Common myeloid progenitor, CD34-positive (primary cell): ENCODE measurements at regions of chr13 and their contacts with region 1.

Region 1: GRCh38 chr13:48037346-48038173 is at the start of gene NUDT15:
- DNase-seq: peak; percentile 99 to 100 (median 99)
- H3K4me3 ChIP-seq: peak within 1 kb of the TSS; percentile 61 to 94 (median 84)
- H3K27ac ChIP-seq: peak within 1 kb of the TSS; percentile 96 to 97
- H3K4me1 ChIP-seq: peaks cover 4 to 22% (median 18%) of the 10 kb centered on the region in 4 experiments
- H3K27me3 ChIP-seq: no peaks in the 10 kb centered on the region

Region 2: DNA sequence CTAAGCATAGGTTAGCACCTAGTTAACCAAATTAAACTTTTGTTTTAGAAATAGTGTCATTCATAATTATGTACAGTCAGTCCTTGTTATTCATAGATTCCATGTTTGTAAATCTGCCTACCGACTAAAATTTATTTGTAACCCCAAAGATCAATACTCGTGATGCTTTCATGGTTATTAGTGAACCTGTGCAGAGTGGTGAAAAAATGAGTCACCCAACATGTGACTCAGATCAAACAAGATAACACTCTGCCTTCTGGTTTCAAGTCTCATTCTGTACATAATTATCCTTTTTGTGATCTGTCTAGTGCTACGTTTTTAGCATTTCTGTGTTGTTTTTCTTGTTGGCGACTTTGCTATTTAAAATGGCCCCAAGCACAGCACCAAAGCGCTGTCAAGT is 311.2 kb before region 1 on chr13:
- CTCF ChIA-PET with region 1: no interaction called
- POLR2A ChIA-PET with region 1: no interaction called
- DNase-seq: no peak
- H3K4me3 ChIP-seq: no peak overlapping the region
- H3K27ac ChIP-seq: no peak overlapping the region
- H3K4me1 ChIP-seq: no peaks in the 10 kb centered on the region
- H3K27me3 ChIP-seq: no peaks in the 10 kb centered on the region

Region 3: GRCh38 chr13:47964863-47965262 is 72.7 kb before region 1 on chr13:
- CTCF ChIA-PET with region 1: no interaction called
- POLR2A ChIA-PET with region 1: no interaction called
- DNase-seq: no peak
- H3K4me3 ChIP-seq: no peak overlapping the region
- H3K27ac ChIP-seq: no peak overlapping the region
- H3K4me1 ChIP-seq: no peaks in the 10 kb centered on the region
- H3K27me3 ChIP-seq: no peaks in the 10 kb centered on the region

Region 4: DNA sequence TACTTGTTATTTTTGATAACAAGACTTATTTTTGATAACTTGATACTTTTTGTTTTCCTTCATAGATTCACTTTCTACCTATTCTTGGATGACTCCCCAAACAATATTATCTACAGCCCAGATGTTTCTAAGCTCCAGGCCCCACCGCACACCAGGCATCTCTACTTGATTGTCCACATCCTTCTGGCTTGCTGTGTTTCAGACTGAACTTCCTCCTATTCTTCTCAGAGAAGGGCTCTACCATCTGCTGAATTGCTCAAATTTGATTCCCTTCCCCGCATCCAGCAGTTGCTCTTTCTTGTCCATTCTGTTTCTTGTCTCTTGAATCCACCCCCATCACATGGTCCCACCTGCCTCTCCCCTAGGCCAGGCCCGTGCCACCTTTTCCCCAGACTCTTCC is 13.0 kb after region 1 on chr13:
- CTCF ChIA-PET with region 1: interaction called, 22 read pairs
- POLR2A ChIA-PET with region 1: interaction called, 3 read pairs
- DNase-seq: no peak
- H3K4me3 ChIP-seq: no peak overlapping the region
- H3K27ac ChIP-seq: no peak overlapping the region
- H3K4me1 ChIP-seq: no peaks in the 10 kb centered on the region
- H3K27me3 ChIP-seq: no peaks in the 10 kb centered on the region